Activated CD4-positive, alpha-beta T cell treated with anti-CD3 and anti-CD28 coated beads, Interleukin-2, amount 10 ng/mL, durations not matched to agents 24 days and 14 days (primary cell): ENCODE measurements at regions of chr2 and their contacts with region 1.

Region 1: GRCh38 chr2:203763938-203764664 is 57.7 kb downstream of the CD28 start:
- DNase-seq: peak; percentile 55
- H3K4me3 Mint-ChIP-seq: peak overlapping the region; percentile 19
- H3K27ac Mint-ChIP-seq: peak overlapping the region; percentile 89
- H3K4me1 Mint-ChIP-seq: peaks cover 62% of the 10 kb centered on the region
- H3K27me3 Mint-ChIP-seq: no peaks in the 10 kb centered on the region

Region 2: GRCh38 chr2:203730076-203730729 is 33.9 kb before region 1 on chr2:
- intact Hi-C with region 1: loop called (anchors 1 kb)
- DNase-seq: peak; percentile 71
- H3K4me3 Mint-ChIP-seq: peak overlapping the region; percentile 71
- H3K27ac Mint-ChIP-seq: peak overlapping the region; percentile 96
- H3K4me1 Mint-ChIP-seq: peaks cover 79% of the 10 kb centered on the region
- H3K27me3 Mint-ChIP-seq: no peaks in the 10 kb centered on the region

Region 3: GRCh38 chr2:203740780-203741281 is 23.3 kb before region 1 on chr2:
- intact Hi-C with region 1: loop called (anchors 1 kb)
- DNase-seq: peak; percentile 89
- H3K4me3 Mint-ChIP-seq: peak overlapping the region; percentile 69
- H3K27ac Mint-ChIP-seq: peak overlapping the region; percentile 96
- H3K4me1 Mint-ChIP-seq: peaks cover 72% of the 10 kb centered on the region
- H3K27me3 Mint-ChIP-seq: no peaks in the 10 kb centered on the region

Region 4: GRCh38 chr2:203748331-203749126 is 15.6 kb before region 1 on chr2:
- intact Hi-C with region 1: loop called (anchors 1 kb)
- DNase-seq: peak; percentile 67
- H3K4me3 Mint-ChIP-seq: peak overlapping the region; percentile 32
- H3K27ac Mint-ChIP-seq: peak overlapping the region; percentile 91
- H3K4me1 Mint-ChIP-seq: peaks cover 52% of the 10 kb centered on the region
- H3K27me3 Mint-ChIP-seq: no peaks in the 10 kb centered on the region

Region 5: DNA sequence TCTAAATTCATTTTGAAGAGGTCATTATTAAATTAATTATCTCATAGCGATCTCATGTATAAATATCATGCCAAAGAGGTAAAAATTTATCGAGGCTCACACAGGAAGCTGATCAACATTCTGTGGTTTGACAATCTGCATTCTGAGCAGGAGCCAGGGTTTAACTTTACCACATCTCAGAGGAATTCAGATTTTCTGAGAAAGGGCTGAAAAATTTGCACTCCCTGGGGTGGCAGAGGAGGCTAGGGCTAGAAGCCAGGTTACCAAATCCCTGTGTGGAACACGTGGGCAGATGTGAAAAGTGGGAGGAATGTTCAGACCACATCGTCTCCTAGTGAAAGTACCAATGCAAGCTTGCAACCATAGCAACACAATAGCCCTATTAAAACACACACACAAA is 40.0 kb after region 1 on chr2:
- intact Hi-C with region 1: loop called (anchors 1 kb)
- DNase-seq: peak; percentile 82
- H3K4me3 Mint-ChIP-seq: peak overlapping the region; percentile 40
- H3K27ac Mint-ChIP-seq: peak overlapping the region; percentile 84
- H3K4me1 Mint-ChIP-seq: peaks cover 60% of the 10 kb centered on the region
- H3K27me3 Mint-ChIP-seq: no peaks in the 10 kb centered on the region

Region 6: GRCh38 chr2:203893401-203893800 is 129.3 kb after region 1 on chr2:
- intact Hi-C with region 1: loop called (anchors 1 kb)
- DNase-seq: no peak
- H3K4me3 Mint-ChIP-seq: peak overlapping the region; percentile 21
- H3K27ac Mint-ChIP-seq: peak overlapping the region; percentile 62
- H3K4me1 Mint-ChIP-seq: peaks cover 65% of the 10 kb centered on the region
- H3K27me3 Mint-ChIP-seq: no peaks in the 10 kb centered on the region